Activated naive CD4-positive, alpha-beta T cell treated with anti-CD3 and anti-CD28 coated beads for 36 hours (primary cell): ENCODE measurements at regions of chr12 and their contacts with region 1.

Region 1: DNA sequence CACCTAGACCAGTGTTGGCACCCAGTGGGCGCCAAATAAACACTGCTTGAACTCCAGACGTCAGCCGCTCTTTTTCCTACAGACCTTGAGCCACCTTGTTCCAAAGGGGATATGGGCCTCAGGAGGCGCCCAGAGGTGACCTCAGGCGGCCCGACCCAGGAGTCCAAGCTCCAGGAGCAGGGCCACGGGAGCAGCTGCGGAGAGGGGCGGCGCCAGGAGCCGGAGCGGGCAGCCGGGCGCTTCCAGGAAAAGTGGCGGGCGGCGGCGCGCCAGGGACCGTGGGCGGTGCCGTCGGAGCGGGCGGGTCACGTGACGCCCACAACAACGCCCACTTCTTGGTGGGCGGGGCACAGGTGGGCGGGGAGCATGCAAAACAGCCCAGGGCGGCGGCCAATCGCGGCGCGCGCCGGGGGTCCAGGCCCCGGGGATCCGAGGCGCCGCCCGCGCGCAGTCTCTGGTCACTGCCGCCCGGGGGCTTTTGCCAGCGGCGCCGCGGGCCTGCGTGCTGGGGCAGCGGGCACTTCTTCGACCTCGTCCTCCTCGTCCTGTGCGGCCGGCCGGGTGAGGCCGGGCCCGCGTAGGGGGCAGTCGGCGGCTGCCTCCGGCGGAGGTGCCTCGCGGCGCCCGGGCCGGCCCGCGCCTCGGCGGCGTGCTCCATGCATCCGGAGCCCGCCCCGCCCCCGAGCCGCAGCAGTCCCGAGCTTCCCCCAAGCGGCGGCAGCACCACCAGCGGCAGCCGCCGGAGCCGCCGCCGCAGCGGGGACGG is at the start of gene ORAI1:
- DNase-seq: peak; percentile 97
- H3K4me3 Mint-ChIP-seq: peak within 1 kb of the TSS; percentile 83
- H3K27ac Mint-ChIP-seq: peak within 1 kb of the TSS; percentile 98
- H3K4me1 Mint-ChIP-seq: peaks cover 37% of the 10 kb centered on the region
- H3K27me3 Mint-ChIP-seq: no peaks in the 10 kb centered on the region
- total RNA-seq, gene ORAI1: 21.1 to 21.8 TPM

Region 2: GRCh38 chr12:121144416-121144914 is 481.8 kb before region 1 on chr12:
- CTCF ChIA-PET with region 1: no interaction called
- intact Hi-C with region 1: loop called (anchors 2 kb)
- DNase-seq: peak; percentile 48
- H3K4me3 Mint-ChIP-seq: no peak overlapping the region
- H3K27ac Mint-ChIP-seq: peak overlapping the region; percentile 77
- H3K4me1 Mint-ChIP-seq: peaks cover 29% of the 10 kb centered on the region
- H3K27me3 Mint-ChIP-seq: no peaks in the 10 kb centered on the region

Region 3: GRCh38 chr12:121536899-121537813 is 89.1 kb before region 1 on chr12:
- CTCF ChIA-PET with region 1: interaction called, 3 read pairs
- intact Hi-C with region 1: loop called (anchors 2 kb)
- DNase-seq: peak; percentile 68
- H3K4me3 Mint-ChIP-seq: peak overlapping the region; percentile 70
- H3K27ac Mint-ChIP-seq: peak overlapping the region; percentile 69
- H3K4me1 Mint-ChIP-seq: peaks cover 43% of the 10 kb centered on the region
- H3K27me3 Mint-ChIP-seq: no peaks in the 10 kb centered on the region

Region 4: DNA sequence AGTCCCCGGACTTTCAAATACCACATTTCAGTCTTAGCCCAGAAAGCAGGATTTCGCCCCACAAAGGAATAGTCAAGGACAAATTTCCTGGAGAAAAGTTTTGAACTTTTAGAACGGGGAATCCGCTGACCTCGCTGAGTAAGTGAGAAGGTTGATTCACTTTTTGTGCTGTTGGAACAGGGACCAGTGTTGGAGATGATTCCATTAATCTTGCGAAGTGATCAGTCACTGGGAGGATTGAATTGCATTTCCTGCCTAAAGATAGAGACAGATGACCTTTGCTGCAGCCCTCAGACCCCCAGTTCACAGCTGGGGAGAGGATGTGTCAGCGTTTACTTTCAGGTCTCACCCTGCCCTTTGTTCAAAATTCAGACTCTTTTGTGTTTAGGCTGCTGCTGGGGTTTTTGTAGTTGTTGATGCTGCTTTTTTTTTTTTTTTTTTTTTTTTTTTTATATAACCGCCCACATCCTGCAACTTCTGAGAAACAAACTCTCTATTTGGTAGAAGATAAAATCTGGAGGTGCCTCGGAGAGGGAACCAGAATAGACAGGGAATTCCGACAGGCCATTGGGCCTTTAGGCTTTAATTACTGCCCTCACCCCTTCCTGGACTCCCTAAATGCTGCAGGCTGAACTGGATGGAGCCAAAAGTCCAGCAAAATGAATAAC is 35.7 kb before region 1 on chr12:
- CTCF ChIA-PET with region 1: interaction called, 5 read pairs
- intact Hi-C with region 1: loop called (anchors 1 kb)
- DNase-seq: peak; percentile 80
- H3K4me3 Mint-ChIP-seq: peak overlapping the region; percentile 85
- H3K27ac Mint-ChIP-seq: peak overlapping the region; percentile 96
- H3K4me1 Mint-ChIP-seq: peaks cover 30% of the 10 kb centered on the region
- H3K27me3 Mint-ChIP-seq: no peaks in the 10 kb centered on the region

Region 5: DNA sequence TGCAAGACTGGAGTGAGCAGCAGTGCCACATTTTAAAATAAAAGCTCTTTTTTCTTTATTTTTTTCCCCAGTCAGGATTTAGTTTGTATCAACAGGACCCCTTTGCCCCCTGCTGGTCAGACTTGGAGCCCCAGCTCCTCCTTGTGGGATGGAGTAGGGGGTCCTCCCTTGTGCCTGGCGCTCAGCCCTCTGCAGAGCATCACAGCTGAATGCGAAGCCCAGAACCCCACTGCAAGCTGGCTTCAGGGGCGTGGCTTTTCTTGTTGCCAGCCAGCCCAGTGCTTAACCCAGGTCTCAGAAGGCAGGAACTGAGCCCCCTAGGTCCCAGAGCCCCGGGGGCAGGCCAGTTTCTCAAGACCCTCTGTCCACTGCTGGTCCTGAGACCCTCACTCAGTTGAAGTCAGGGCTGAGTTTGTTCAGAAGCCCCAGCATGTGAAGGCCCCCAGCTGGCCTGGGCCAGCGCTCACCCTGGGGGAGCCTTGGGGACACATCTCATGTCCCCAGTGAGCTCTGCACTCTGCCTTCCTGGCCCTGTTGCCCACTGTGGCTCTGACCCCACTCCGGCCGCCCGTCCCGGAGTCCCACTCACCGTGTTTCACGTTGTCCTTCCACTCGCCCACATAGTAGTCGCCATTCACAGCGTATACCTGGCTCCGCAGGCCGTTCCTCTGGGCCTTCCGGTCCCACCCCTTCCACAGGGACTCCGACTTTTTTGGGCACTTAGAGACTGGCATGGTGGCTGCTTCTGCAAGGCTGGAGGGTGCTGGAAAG is 42.7 kb after region 1 on chr12:
- CTCF ChIA-PET with region 1: interaction called, 110 read pairs
- intact Hi-C with region 1: loop called (anchors 1 kb)
- DNase-seq: peak; percentile 80
- H3K4me3 Mint-ChIP-seq: no peak overlapping the region
- H3K27ac Mint-ChIP-seq: peak overlapping the region; percentile 63
- H3K4me1 Mint-ChIP-seq: peaks cover 58% of the 10 kb centered on the region
- H3K27me3 Mint-ChIP-seq: no peaks in the 10 kb centered on the region

Region 6: GRCh38 chr12:122078141-122079032 is 452.1 kb after region 1 on chr12 and contains the start of gene MLXIP:
- CTCF ChIA-PET with region 1: no interaction called
- intact Hi-C with region 1: loop called (anchors 5 kb)
- DNase-seq: peak; percentile 91
- H3K4me3 Mint-ChIP-seq: peak within 1 kb of the TSS; percentile 85
- H3K27ac Mint-ChIP-seq: peak within 1 kb of the TSS; percentile 51
- H3K4me1 Mint-ChIP-seq: peaks cover 47% of the 10 kb centered on the region
- H3K27me3 Mint-ChIP-seq: no peaks in the 10 kb centered on the region
- total RNA-seq, gene MLXIP: 18.8 to 22.0 TPM